ENCODE measurements at regions of chr9 and their contacts with region 1.

Region 1: DNA sequence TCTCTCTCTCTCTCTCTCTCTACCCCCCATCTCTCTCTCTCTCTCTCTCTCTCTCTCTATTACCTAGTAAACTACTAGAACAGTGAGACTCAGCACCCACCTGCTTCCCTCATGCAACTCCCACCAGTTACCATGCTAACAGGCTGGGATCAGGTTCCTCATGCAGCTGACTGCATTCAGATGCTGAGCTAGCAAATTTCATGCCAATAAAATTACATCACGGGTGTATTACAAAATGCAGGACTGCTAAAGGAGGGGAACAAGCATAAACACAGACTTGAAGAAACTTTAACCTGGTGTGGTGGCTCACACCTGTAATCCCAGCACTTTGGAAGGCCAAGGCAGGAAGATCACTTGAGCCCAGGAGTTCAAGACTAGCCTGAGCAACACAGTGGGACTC is 76.0 kb downstream of the CEMIP2 start:
- DNase-seq: peak; percentile 70
- H3K4me3 Mint-ChIP-seq: no peak overlapping the region
- H3K27ac Mint-ChIP-seq: no peak overlapping the region
- H3K4me1 Mint-ChIP-seq: peaks cover 13% of the 10 kb centered on the region
- H3K27me3 Mint-ChIP-seq: no peaks in the 10 kb centered on the region
- CTCF ChIP-seq: no peak

Region 2: GRCh38 chr9:70553707-70554673 is 1138.3 kb before region 1 on chr9:
- CTCF ChIA-PET with region 1: no interaction called
- POLR2A ChIA-PET with region 1: no interaction called
- intact Hi-C with region 1: no loop called
- DNase-seq: peak; percentile 46
- H3K4me3 Mint-ChIP-seq: no peak overlapping the region
- H3K27ac Mint-ChIP-seq: peak overlapping the region; percentile 70
- H3K4me1 Mint-ChIP-seq: peaks cover 9% of the 10 kb centered on the region
- H3K27me3 Mint-ChIP-seq: no peaks in the 10 kb centered on the region
- CTCF ChIP-seq: no peak

Region 3: DNA sequence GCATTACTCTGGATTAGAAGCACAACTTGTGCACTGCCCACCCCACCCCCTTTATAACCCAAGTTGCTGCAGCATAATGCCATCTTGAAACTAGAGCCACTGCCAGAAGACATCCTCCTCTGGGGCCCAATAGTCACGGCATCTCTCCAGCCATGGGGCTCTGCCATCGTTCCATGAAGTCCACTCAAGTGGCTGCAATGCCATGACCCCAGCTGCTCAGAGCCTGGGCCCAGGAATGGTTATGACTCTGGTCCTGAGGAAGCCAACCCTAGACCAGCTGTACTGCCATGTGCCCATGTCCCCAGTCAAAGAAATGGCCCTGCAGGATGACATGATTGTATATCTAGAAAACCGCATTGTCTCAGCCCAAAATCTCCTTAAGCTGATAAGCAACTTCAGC is 196.0 kb before region 1 on chr9:
- CTCF ChIA-PET with region 1: no interaction called
- POLR2A ChIA-PET with region 1: no interaction called
- intact Hi-C with region 1: no loop called
- DNase-seq: no peak
- H3K4me3 Mint-ChIP-seq: no peak overlapping the region
- H3K27ac Mint-ChIP-seq: no peak overlapping the region
- H3K4me1 Mint-ChIP-seq: no peaks in the 10 kb centered on the region
- H3K27me3 Mint-ChIP-seq: no peaks in the 10 kb centered on the region
- CTCF ChIP-seq: no peak

Region 4: DNA sequence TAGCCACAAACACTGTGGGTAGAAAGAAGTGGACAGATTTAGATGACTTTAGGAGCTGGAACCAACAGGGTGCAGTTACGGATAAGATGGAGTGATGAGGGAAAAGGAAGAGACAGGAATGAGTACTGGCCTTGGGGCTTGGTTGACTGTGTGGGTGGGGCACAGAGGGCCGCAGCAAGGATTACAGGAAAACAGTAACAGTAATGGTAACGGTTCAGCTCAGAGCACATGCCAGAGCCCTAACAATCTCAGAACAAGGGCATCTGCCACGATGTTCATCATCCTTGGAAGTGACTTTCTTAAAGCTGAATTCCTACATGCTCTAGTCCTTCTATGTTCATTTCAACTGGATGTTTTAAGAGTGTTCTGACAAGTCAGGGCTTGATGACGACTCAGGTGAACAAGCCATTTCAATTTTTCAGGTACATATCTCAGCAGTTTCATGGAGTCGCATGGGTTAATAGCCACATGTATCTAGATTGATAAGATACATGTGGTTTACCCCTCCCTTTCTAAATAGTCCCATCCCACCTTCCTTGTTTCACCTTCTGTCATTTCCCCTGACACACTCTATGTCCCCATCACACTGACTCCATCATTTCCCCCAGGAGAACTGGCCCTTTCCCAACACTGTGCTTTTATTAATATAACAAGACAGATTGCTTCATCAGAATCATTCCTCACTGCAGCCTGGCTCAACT is 11.0 kb after region 1 on chr9:
- CTCF ChIA-PET with region 1: interaction called, 4 read pairs
- POLR2A ChIA-PET with region 1: interaction called, 16 read pairs
- intact Hi-C with region 1: no loop called
- DNase-seq: peak; percentile 76
- H3K4me3 Mint-ChIP-seq: no peak overlapping the region
- H3K27ac Mint-ChIP-seq: peak overlapping the region; percentile 20
- H3K4me1 Mint-ChIP-seq: peaks cover 17% of the 10 kb centered on the region
- H3K27me3 Mint-ChIP-seq: no peaks in the 10 kb centered on the region
- CTCF ChIP-seq: no peak